H1 (cell line): ENCODE measurements at regions of chr10 and their contacts with region 1.

Region 1: GRCh38 chr10:70348228-70348850 is 34.1 kb downstream of the LRRC20 start:
- DNase-seq: peak in 1 of 2 experiments; percentile 73
- H3K4me3 ChIP-seq: no peak overlapping the region
- H3K27ac ChIP-seq: no peak overlapping the region
- H3K4me1 ChIP-seq: no peaks in the 10 kb centered on the region
- H3K27me3 ChIP-seq: no peaks in the 10 kb centered on the region
- CTCF ChIP-seq: peak; percentile 72 to 85 (median 78)
- EP300 ChIP-seq: no peak
- POLR2A ChIP-seq: no peak
- RAD21 ChIP-seq: peak; percentile 68 to 82

Region 2: GRCh38 chr10:70084189-70084588 is 264.1 kb before region 1 on chr10:
- CTCF ChIA-PET with region 1: no interaction called
- POLR2A ChIA-PET with region 1: no interaction called
- DNase-seq: no peak
- H3K4me3 ChIP-seq: no peak overlapping the region
- H3K27ac ChIP-seq: no peak overlapping the region
- H3K4me1 ChIP-seq: no peaks in the 10 kb centered on the region; a peak in 2 of 7 replicates
- H3K27me3 ChIP-seq: no peaks in the 10 kb centered on the region
- CTCF ChIP-seq: no peak
- EP300 ChIP-seq: no peak
- POLR2A ChIP-seq: no peak
- RAD21 ChIP-seq: no peak

Region 3: GRCh38 chr10:70115948-70116682 is 232.2 kb before region 1 on chr10:
- CTCF ChIA-PET with region 1: interaction called, 10 read pairs
- POLR2A ChIA-PET with region 1: no interaction called
- DNase-seq: peak in 1 of 2 experiments; percentile 84
- H3K4me3 ChIP-seq: no peak overlapping the region
- H3K27ac ChIP-seq: no peak overlapping the region
- H3K4me1 ChIP-seq: no peaks in the 10 kb centered on the region; a peak in 1 of 7 replicates
- H3K27me3 ChIP-seq: no peaks in the 10 kb centered on the region
- CTCF ChIP-seq: peak; percentile 69 to 90 (median 88)
- EP300 ChIP-seq: no peak
- POLR2A ChIP-seq: no peak
- RAD21 ChIP-seq: peak; percentile 50 to 64

Region 4: DNA sequence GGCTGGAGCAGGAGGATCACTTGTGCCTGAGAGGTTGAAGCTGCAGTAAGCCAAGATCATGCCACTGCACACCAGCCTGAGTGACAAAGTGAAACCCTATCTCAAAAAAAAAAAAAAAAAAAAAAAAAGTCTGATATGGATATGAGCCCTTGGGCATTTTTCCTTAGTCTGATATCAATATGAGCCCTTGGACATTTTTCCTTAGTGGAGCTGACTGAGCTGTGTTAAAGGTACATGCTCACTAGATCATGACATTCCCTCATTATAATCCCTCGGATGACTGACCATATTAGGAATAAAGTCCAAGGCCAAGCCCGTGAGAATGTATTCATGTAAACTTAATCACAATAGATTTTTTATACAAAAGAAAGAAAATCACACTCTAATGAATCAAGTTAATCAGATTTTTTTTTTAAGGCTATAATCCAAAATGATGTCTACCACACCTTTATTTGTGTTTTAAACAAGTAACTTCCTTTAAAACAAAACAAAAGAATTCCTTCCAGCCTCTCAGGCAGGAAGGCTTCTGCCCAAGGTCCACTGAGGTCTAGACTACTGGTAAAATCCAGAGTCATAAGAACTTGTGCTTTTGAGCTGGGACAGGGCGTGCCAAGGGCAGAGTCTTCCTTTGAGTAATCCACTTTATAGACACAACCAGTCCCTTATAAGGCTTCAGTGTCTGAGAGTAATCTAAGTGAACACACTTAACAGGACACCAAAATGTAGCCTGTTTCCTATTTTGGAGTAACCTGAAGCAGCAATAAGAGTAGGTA is 120.6 kb before region 1 on chr10:
- CTCF ChIA-PET with region 1: interaction called, 96 read pairs
- POLR2A ChIA-PET with region 1: interaction called, 3 read pairs
- DNase-seq: no peak
- H3K4me3 ChIP-seq: no peak overlapping the region
- H3K27ac ChIP-seq: no peak overlapping the region
- H3K4me1 ChIP-seq: peaks cover 0 to 4% (median 2%) of the 10 kb centered on the region in 4 experiments; a peak in 4 of 7 replicates
- H3K27me3 ChIP-seq: peaks cover 0 to 4% (median 0%) of the 10 kb centered on the region in 4 experiments; a peak in 2 of 7 replicates
- CTCF ChIP-seq: no peak
- EP300 ChIP-seq: no peak
- POLR2A ChIP-seq: no peak
- RAD21 ChIP-seq: no peak

Region 5: GRCh38 chr10:70267161-70267933 is 81.0 kb before region 1 on chr10:
- CTCF ChIA-PET with region 1: interaction called, 329 read pairs
- POLR2A ChIA-PET with region 1: no interaction called
- DNase-seq: peak in 1 of 2 experiments; percentile 89
- H3K4me3 ChIP-seq: no peak overlapping the region
- H3K27ac ChIP-seq: no peak overlapping the region
- H3K4me1 ChIP-seq: no peaks in the 10 kb centered on the region
- H3K27me3 ChIP-seq: no peaks in the 10 kb centered on the region
- CTCF ChIP-seq: peak; percentile 67 to 84 (median 79)
- EP300 ChIP-seq: no peak
- POLR2A ChIP-seq: no peak
- RAD21 ChIP-seq: peak; percentile 39 to 63; a peak in 3 of 4 replicates

Region 6: DNA sequence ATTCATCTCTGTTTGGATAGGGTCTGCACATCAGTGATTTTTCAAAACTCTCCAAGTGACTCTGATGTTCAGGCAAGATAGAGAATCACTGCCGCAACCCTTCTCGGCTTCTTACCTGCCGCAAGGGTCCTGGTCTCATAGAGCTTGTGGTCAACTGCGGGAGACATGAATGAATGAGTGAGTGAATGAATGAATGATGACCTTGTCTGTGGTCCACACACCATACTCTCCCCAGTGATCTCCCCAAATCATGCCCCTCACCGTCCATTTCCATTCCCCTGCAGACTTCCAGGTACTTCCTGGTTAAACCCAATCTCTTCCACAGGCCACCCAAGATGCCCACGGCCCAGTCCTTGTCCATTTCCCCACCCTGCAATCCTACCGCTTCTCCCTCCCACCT is 58.6 kb before region 1 on chr10:
- CTCF ChIA-PET with region 1: interaction called, 10 read pairs
- POLR2A ChIA-PET with region 1: no interaction called
- DNase-seq: no peak
- H3K4me3 ChIP-seq: no peak overlapping the region
- H3K27ac ChIP-seq: no peak overlapping the region
- H3K4me1 ChIP-seq: peaks cover 0 to 4% (median 0%) of the 10 kb centered on the region in 4 experiments; a peak in 2 of 7 replicates
- H3K27me3 ChIP-seq: peaks cover 0 to 8% (median 0%) of the 10 kb centered on the region in 4 experiments; a peak in 4 of 7 replicates
- CTCF ChIP-seq: no peak
- EP300 ChIP-seq: no peak
- POLR2A ChIP-seq: no peak
- RAD21 ChIP-seq: no peak

Region 7: GRCh38 chr10:70331486-70332268 is 16.7 kb before region 1 on chr10:
- CTCF ChIA-PET with region 1: interaction called, 47 read pairs
- POLR2A ChIA-PET with region 1: no interaction called
- DNase-seq: no peak
- H3K4me3 ChIP-seq: no peak overlapping the region
- H3K27ac ChIP-seq: no peak overlapping the region
- H3K4me1 ChIP-seq: peaks cover 0 to 2% (median under 1%) of the 10 kb centered on the region in 4 experiments; a peak in 3 of 7 replicates
- H3K27me3 ChIP-seq: no peaks in the 10 kb centered on the region
- CTCF ChIP-seq: peak; percentile 31 to 50 (median 37)
- EP300 ChIP-seq: no peak
- POLR2A ChIP-seq: no peak
- RAD21 ChIP-seq: peak; percentile 57 to 76

Region 8: DNA sequence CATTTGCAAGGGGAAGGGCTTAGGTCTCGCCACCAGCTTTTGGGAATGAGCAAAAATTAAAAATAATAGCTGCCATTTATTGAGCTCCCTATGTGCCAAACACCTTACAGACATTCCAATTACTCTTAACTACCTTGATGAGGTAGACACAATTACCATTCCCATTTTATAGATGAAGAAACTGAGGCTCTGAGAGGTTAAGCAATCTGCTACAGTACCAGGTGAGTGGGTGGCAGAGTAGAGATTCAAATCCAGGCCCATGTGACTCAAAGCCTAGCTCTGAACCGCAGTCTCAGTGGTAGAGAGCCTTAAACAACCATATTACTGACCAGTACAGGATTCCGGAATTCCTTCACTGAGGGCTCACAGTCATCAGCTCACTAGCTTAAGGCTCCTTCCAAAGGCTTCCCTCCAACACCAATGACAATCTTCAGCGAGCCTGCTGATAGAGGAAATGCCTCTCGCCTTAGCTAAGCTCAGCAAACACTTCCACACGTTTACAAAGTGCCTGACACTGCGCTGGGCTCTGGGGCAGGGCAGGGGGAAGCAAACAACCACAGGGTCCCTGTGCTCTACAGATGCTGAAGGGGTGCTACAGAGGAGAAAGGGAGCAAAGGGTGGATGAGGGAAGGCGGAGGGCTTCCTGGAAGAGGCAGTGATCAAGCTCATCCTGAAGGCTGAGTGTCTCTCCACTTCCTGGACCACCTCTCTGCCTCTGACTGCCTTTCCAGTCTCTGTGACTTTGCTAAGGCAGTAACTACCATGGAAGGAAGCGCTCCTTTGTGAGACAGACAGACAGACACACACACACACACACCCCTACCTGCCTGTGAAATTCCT is 26.7 kb after region 1 on chr10:
- CTCF ChIA-PET with region 1: interaction called, 19 read pairs
- POLR2A ChIA-PET with region 1: no interaction called
- DNase-seq: no peak
- H3K4me3 ChIP-seq: no peak overlapping the region
- H3K27ac ChIP-seq: no peak overlapping the region; the same call in 1 of the 2 replicates
- H3K4me1 ChIP-seq: peaks cover 0 to 4% (median 1%) of the 10 kb centered on the region in 4 experiments; a peak in 2 of 7 replicates
- H3K27me3 ChIP-seq: no peaks in the 10 kb centered on the region
- CTCF ChIP-seq: no peak
- EP300 ChIP-seq: no peak
- POLR2A ChIP-seq: no peak
- RAD21 ChIP-seq: no peak